ENCODE measurements at regions of chr1 and their contacts with region 1.

Region 1: DNA sequence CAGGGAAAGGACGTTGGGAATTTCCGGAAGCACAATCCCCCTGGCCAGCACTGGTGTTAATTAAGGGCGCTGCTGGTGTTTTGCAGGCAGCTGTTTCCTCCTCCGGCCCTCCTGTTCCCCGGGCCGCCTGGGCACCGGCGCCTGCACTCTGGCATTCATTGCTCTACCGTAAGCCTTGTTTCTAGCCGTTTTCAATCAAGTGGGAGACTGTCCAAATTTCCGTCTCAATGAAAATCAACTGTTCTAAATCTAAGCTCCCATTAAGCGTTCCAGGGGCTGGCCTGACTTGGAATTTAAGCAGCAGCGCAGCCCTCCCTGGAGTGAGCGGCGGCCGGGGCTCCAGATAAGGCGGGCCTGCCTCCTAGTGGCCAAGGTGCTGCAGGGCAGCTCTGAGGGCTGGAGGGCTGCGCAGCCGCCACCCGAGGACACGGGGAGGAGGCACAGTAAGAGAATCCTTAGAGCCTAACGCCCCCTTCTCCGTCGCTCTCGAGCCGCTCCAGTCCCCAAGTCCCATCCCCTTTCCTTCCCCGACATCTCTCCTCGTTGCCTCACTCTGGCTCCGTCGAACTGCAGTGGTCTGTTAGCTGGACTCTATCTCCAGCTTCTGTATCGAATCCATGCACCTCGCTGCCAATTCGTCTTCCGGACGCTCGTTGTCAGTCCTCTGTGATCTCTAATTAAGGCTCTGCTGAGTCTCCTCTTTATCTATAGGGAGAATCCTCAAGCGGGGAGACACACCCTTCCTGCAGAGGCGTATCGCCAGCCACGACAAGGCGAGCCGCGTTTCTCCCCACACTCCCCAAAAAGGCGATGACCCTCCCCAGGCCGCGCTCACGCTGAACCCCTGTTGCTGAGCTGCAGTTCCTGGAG is 57.8 kb upstream of the LRRC8D start:
- DNase-seq: peak; percentile 92
- ATAC-seq: peak; percentile 99
- H3K4me3 ChIP-seq: peak overlapping the region; percentile 54
- H3K27ac ChIP-seq: peak overlapping the region; percentile 67
- H3K4me1 ChIP-seq: peaks cover 12% of the 10 kb centered on the region
- H3K27me3 ChIP-seq: no peaks in the 10 kb centered on the region
- CTCF ChIP-seq: peak; percentile 97

Region 2: GRCh38 chr1:89632657-89633247 is 130.3 kb before region 1 on chr1 and contains the start of gene LRRC8C:
- intact Hi-C with region 1: loop called (anchors 5 kb)
- DNase-seq: peak; percentile 93
- ATAC-seq: peak; percentile 98
- H3K4me3 ChIP-seq: peak within 1 kb of the TSS; percentile 93
- H3K27ac ChIP-seq: peak within 1 kb of the TSS; percentile 88
- H3K4me1 ChIP-seq: peaks cover 9% of the 10 kb centered on the region
- H3K27me3 ChIP-seq: no peaks in the 10 kb centered on the region
- CTCF ChIP-seq: peak; percentile 30
- total RNA-seq, gene LRRC8C: 12.6 TPM

Region 3: GRCh38 chr1:89657886-89658285 is 105.1 kb before region 1 on chr1:
- intact Hi-C with region 1: no loop called
- DNase-seq: no peak
- ATAC-seq: no peak
- H3K4me3 ChIP-seq: no peak overlapping the region
- H3K27ac ChIP-seq: no peak overlapping the region
- H3K4me1 ChIP-seq: no peaks in the 10 kb centered on the region
- H3K27me3 ChIP-seq: no peaks in the 10 kb centered on the region
- CTCF ChIP-seq: no peak

Measured in upper lobe of right lung (tissue), 1 donor.